HCT116 (cell line): ENCODE measurements at regions of chr17 and their contacts with region 1.

Region 1: DNA sequence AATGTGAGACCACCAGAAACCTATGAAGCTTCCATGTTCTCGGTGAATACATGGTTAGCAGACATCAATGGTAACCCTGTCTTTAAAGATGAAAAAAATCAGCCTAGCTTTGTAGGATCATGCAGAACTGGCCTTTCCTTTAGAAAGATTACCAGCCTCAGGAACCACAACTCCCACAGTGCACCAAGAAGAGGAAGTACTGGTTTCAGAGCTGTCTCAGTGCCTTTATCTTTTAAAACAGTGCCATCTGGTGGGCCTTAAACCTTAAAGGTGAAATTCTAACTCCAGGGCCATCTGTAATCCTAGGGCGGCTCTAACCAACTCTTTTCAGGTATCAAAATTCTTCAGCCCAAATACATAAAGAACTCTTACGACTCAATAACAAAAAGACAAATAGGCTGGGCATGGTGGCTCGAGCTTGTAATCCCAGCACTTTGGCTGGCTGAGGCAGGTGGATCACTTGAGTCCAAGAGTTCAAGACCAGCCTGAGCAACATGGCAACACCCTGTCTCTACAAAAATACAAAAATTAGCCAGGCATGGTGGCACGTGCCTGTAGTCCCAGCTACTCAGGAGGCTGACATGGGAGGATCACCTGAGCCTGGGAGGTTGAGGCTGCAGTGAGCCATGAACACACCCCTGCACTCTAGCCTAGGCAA is 5.4 kb downstream of the ATPAF2 start:
- DNase-seq: peak; percentile 80
- ATAC-seq: peak; percentile 94
- H3K4me3 ChIP-seq: no peak overlapping the region
- H3K27ac ChIP-seq: no peak overlapping the region
- H3K4me1 ChIP-seq: peaks cover 6 to 23% of the 10 kb centered on the region in 2 experiments; a peak in 3 of 4 replicates
- H3K27me3 ChIP-seq: no peaks in the 10 kb centered on the region
- CTCF ChIP-seq: peak; percentile 50 to 92 (median 70)
- POLR2A ChIP-seq: no peak
- RAD21 ChIP-seq: peak; percentile 98

Region 2: DNA sequence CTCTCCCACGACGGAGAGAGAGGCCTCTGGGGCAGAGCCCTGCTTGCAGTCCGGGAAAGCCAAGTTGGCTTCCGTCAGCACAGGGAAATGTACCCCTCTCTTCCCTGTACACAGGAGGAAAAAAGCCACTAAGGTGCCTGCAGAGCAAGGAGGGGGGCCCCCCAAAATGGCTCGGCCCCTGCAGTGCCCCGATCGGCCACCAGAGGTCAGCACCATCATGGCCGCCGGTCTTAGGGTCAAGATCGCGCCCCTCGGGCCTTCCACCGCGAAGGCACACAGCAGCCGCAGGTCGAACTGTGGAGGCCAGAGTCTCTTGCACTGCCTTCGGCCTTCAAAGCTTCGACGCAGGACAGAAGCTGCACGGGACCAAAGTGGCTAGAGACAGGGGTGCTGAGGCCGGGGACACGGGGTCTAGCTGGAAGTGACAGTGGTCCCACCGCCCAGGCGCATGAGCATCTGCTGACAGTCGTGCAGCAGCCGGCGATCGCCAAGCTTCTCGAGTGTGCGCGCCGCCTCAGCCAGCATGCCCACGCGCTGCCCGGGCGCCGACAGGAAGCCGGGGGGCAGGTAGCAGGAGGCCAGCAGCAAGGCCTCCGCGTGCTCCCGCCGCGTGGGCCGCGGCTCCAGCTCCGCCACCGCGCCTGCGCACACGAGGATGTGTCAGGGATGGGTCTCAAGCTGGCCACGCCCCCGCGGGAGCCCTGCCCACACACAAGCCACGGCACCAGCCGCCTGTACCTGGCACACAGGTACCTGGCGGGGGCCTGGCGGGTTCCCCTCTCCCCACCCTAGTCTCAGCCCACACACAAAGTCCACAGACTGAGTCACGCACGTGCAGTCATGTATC is 221.1 kb before region 1 on chr17:
- CTCF ChIA-PET with region 1: interaction called, 3 read pairs
- POLR2A ChIA-PET with region 1: no interaction called
- RAD21 ChIA-PET with region 1: no interaction called
- intact Hi-C with region 1: loop called (anchors 5 kb)
- DNase-seq: no peak
- ATAC-seq: peak; percentile 46
- H3K4me3 ChIP-seq: no peak overlapping the region
- H3K27ac ChIP-seq: peak overlapping the region; percentile 54
- H3K4me1 ChIP-seq: peaks cover 8 to 28% of the 10 kb centered on the region in 2 experiments; a peak in 3 of 4 replicates
- H3K27me3 ChIP-seq: no peaks in the 10 kb centered on the region
- CTCF ChIP-seq: peak; percentile 66 to 98 (median 96); a peak in 5 of 6 replicates
- POLR2A ChIP-seq: no peak
- RAD21 ChIP-seq: peak; percentile 79

Region 3: GRCh38 chr17:17890773-17891759 is 142.5 kb before region 1 on chr17:
- CTCF ChIA-PET with region 1: interaction called, 26 read pairs
- POLR2A ChIA-PET with region 1: no interaction called
- RAD21 ChIA-PET with region 1: interaction called, 7 to 13 read pairs
- intact Hi-C with region 1: loop called (anchors 1 kb)
- DNase-seq: peak; percentile 53
- ATAC-seq: peak; percentile 98
- H3K4me3 ChIP-seq: no peak overlapping the region
- H3K27ac ChIP-seq: no peak overlapping the region
- H3K4me1 ChIP-seq: 0 out of 4 replicates have a peak, but pooled peaks cover 0 to 4% of the 10 kb centered on the region in 2 experiments
- H3K27me3 ChIP-seq: no peaks in the 10 kb centered on the region
- CTCF ChIP-seq: peak; percentile 88 to 95 (median 89)
- POLR2A ChIP-seq: no peak
- RAD21 ChIP-seq: peak; percentile 98